Right ventricle myocardium inferior (tissue), 1 donor: ENCODE measurements at regions of chr12 and their contacts with region 1.

Region 1: GRCh38 chr12:120759711-120760412 is 34.2 kb downstream of the ACADS start:
- DNase-seq: no peak
- ATAC-seq: no peak

Region 2: DNA sequence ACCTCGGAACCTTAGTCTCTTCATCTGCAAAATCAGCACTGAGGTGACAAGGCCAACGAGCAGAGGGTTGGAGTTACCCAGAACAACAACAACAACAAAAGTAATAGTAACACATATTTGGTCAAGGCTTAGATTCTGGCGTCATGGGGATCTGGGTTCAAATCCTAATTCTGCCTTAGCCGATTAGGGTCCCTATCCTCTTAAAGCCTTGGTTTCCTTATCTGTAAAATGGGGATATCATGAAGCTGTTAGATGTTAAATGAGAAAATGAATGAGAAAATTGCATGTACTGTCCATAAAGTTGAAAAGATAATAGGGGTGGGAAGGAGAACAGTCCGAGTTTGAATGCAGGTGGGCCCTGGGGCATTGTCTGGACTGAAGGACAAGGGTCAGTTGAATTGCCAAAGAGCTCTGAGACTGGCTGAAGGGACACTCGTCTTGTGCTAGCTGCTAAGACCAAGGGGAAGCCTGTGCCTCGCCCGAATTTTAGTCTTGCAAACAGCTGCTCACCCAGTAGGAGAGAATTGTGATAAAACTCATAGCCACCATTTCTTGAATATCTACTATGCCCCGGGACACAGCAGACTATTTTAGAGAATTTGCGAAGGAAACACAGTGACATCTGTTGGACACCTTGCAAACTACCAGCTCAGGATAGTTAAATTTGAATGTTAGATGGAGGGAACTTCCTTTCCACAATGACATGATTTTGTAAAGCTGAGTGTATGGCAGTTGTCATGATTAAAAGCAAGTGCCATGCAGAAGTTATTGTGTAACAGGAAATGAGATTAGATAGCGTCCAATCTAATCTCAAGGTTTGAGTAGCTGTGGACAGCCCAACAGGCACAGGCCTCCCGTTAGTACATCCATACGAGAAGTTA is 211.7 kb after region 1 on chr12:
- intact Hi-C with region 1: loop called (anchors 10 kb)
- DNase-seq: no peak
- ATAC-seq: peak; percentile 72